Mammary epithelial cell (primary cell): ENCODE measurements at regions of chr9 and their contacts with region 1.

Region 1: GRCh38 chr9:97237951-97238851 is 69.3 kb upstream of the CCDC180 start:
- DNase-seq: peak; percentile 75
- H3K4me3 ChIP-seq: peak overlapping the region; percentile 42 to 67 (median 51)
- H3K27ac ChIP-seq: no peak overlapping the region
- H3K4me1 ChIP-seq: peaks cover 3% of the 10 kb centered on the region
- H3K27me3 ChIP-seq: no peaks in the 10 kb centered on the region
- CTCF ChIP-seq: no peak

Region 2: GRCh38 chr9:97220894-97221477 is 17.2 kb before region 1 on chr9:
- CTCF ChIA-PET with region 1: no interaction called
- dilution Hi-C with region 1: no loop called
- in situ Hi-C with region 1: no loop called
- intact Hi-C with region 1: loop called (anchors 2 kb)
- DNase-seq: no peak
- H3K4me3 ChIP-seq: peak overlapping the region in 2 of 3 experiments; percentile 39 to 48
- H3K27ac ChIP-seq: no peak overlapping the region
- H3K4me1 ChIP-seq: no peaks in the 10 kb centered on the region
- H3K27me3 ChIP-seq: peaks cover 15% of the 10 kb centered on the region
- CTCF ChIP-seq: no peak

Region 3: GRCh38 chr9:97487107-97487506 is 248.9 kb after region 1 on chr9:
- CTCF ChIA-PET with region 1: no interaction called
- dilution Hi-C with region 1: no loop called
- in situ Hi-C with region 1: no loop called
- intact Hi-C with region 1: no loop called
- DNase-seq: peak; percentile 49
- H3K4me3 ChIP-seq: no peak overlapping the region
- H3K27ac ChIP-seq: no peak overlapping the region
- H3K4me1 ChIP-seq: no peaks in the 10 kb centered on the region
- H3K27me3 ChIP-seq: no peaks in the 10 kb centered on the region
- CTCF ChIP-seq: peak; percentile 45